GM10248 (cell line): ENCODE measurements at regions of chr6 and their contacts with region 1.

Region 1: DNA sequence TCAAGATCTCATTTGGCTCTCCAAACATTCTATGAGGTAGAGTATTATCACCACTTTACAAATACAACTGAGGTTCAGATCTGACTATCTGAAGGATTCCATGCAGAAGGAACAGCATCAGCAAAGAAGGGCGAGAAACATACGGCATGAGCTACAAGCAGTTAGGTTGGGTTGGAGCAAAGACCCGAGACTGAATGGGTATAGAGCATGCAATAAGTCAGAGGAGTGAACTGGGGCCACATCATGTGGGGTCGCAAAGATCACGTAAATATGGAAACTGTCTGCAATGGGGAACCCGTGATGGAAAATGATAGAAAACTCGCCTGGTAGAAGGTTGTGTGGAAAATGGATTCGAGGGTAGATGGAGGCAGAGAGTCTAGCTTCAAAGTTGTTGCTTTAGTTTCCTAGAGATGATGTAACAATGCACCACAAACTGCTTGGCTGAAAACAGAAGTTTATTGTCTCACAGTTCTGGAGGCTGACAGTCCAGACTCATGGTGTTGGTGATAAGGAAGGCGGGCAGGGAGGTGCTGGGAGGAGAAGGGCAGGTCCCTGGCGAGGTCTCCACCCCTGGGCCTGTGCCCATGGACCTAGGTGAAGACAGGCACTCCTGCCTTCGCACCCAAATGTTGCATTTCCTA is 44.3 kb upstream of the BCLAF1 start:
- DNase-seq: no peak
- CTCF ChIP-seq: no peak

Region 2: DNA sequence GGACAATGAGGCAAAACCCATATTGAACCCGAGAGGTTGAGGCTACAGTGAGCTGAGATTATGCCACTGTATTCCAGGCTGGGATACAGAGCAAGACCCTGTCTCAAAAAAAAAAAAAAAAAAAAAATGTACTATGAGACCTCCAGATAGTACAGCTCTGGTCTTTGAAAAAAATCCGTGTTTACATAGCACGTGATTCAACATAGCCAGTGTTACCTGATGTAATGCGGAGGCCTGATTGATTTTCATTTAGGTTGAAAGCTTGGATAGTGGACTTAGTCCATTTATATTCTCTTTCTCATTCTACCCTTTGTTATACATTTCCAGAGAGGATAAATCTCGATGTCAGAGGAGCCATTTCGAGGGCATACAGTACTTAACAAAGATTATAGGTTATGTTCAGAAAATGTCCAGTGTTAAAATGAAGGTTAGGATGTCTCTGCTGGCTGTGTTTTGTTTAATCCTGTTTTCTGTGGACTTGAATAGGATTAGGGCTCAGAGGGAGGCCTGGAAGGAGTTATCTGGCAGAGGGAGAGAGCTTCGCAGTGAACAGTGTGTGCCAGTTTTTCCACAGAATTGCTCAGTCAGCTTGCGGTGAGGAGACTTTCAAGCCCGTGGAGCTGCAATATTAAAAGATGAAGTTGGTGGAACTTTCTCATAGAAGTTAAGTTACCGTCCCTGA is 10.4 kb before region 1 on chr6:
- CTCF ChIA-PET with region 1: interaction called, 14 read pairs
- POLR2A ChIA-PET with region 1: no interaction called
- DNase-seq: no peak
- CTCF ChIP-seq: no peak